Activated CD4-positive, alpha-beta memory T cell treated with anti-CD3 and anti-CD28 coated beads for 36 hours (primary cell): ENCODE measurements at regions of chr12 and their contacts with region 1.

Region 1: GRCh38 chr12:49515266-49515665 is 23.6 kb upstream of the KCNH3 start:
- DNase-seq: no peak
- H3K4me3 Mint-ChIP-seq: no peak overlapping the region
- H3K27ac Mint-ChIP-seq: no peak overlapping the region
- H3K4me1 Mint-ChIP-seq: peaks cover 6% of the 10 kb centered on the region
- H3K27me3 Mint-ChIP-seq: no peaks in the 10 kb centered on the region

Region 2: DNA sequence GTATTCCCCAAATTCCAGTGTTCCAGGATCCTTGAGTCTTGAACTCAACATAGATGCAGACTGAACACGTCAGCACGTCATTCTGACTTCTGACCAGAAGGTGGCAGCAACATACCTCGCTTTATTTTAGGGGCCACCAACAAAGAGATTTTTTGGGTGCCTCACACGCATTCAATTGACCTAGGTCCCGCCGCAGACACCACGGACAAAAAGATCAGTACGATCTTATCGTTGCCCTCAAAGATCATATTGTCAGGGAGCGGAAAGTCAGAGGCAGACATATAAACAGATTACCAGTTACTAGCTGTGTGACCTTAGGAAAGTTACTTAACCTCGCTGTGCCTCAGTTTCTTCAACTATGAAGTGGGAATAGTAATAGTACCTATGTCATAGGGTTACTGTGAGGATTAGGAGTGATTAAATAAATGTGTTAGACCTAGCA is 226.8 kb before region 1 on chr12:
- CTCF ChIA-PET with region 1: interaction called, 27 read pairs
- POLR2A ChIA-PET with region 1: no interaction called
- intact Hi-C with region 1: loop called (anchors 2 kb)
- DNase-seq: peak; percentile 80
- H3K4me3 Mint-ChIP-seq: no peak overlapping the region
- H3K27ac Mint-ChIP-seq: no peak overlapping the region
- H3K4me1 Mint-ChIP-seq: no peaks in the 10 kb centered on the region
- H3K27me3 Mint-ChIP-seq: peaks cover 23% of the 10 kb centered on the region

Region 3: GRCh38 chr12:49296034-49296835 is 219.0 kb before region 1 on chr12:
- CTCF ChIA-PET with region 1: interaction called, 27 read pairs
- POLR2A ChIA-PET with region 1: no interaction called
- intact Hi-C with region 1: no loop called
- DNase-seq: peak; percentile 75
- H3K4me3 Mint-ChIP-seq: no peak overlapping the region
- H3K27ac Mint-ChIP-seq: no peak overlapping the region
- H3K4me1 Mint-ChIP-seq: peaks cover 12% of the 10 kb centered on the region
- H3K27me3 Mint-ChIP-seq: peaks cover 51% of the 10 kb centered on the region

Region 4: DNA sequence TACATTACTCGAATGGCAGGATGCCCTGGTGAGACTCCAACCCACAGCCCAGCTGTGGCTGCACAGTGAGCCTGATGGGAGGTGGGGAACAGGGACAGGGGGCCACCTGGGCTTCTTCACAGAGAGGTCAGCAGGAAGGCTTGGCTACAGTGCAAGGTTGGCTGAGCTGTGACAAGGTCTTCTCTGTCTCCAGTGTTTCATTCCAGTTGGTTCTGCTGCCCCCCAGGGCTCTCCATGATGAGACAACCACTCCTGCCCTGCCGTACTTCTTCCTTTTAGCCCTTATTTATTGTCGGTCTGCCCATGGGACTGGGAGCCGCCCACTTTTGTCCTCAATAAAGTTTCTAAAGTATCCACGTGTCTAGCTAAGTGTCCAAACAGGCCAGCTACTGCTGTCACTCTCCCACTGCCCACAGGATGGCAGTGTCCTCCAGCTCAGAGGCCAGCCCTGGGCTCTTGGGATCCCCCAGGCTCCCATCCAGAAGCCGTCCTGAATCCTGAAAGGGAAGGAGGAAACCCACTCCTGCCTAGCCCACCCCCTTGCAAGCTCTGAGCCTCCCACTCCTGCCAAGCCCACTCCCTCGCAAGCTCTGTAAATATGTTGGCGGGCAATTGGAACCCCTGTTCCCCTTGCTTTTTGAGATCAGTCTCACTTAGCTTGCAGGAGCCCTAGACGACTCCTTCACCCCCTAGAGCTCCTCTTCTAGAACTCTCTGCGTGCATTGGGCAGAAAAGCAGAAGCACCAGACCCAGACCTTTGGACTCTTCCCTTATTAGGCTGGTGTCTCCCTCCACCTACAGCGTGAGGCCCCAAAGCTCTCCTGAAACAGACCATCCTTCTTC is 183.7 kb before region 1 on chr12:
- CTCF ChIA-PET with region 1: interaction called, 15 read pairs
- POLR2A ChIA-PET with region 1: no interaction called
- intact Hi-C with region 1: no loop called
- DNase-seq: peak; percentile 32
- H3K4me3 Mint-ChIP-seq: no peak overlapping the region
- H3K27ac Mint-ChIP-seq: no peak overlapping the region
- H3K4me1 Mint-ChIP-seq: peaks cover 10% of the 10 kb centered on the region
- H3K27me3 Mint-ChIP-seq: peaks cover 32% of the 10 kb centered on the region

Region 5: GRCh38 chr12:49366652-49367380 is 148.4 kb before region 1 on chr12:
- CTCF ChIA-PET with region 1: interaction called, 428 read pairs
- POLR2A ChIA-PET with region 1: no interaction called
- intact Hi-C with region 1: no loop called
- DNase-seq: peak; percentile 93
- H3K4me3 Mint-ChIP-seq: peak overlapping the region; percentile 95
- H3K27ac Mint-ChIP-seq: peak overlapping the region; percentile 95
- H3K4me1 Mint-ChIP-seq: peaks cover 23% of the 10 kb centered on the region
- H3K27me3 Mint-ChIP-seq: no peaks in the 10 kb centered on the region

Region 6: GRCh38 chr12:49503674-49504180 is 11.5 kb before region 1 on chr12:
- CTCF ChIA-PET with region 1: interaction called, 18 read pairs
- POLR2A ChIA-PET with region 1: no interaction called
- intact Hi-C with region 1: no loop called
- DNase-seq: no peak
- H3K4me3 Mint-ChIP-seq: no peak overlapping the region
- H3K27ac Mint-ChIP-seq: no peak overlapping the region
- H3K4me1 Mint-ChIP-seq: peaks cover 1% of the 10 kb centered on the region
- H3K27me3 Mint-ChIP-seq: no peaks in the 10 kb centered on the region